ENCODE measurements at regions of chr18 and their contacts with region 1.

Region 1: GRCh38 chr18:76922107-76922506 is 99.8 kb downstream of the ZNF236 start:
- DNase-seq: peak; percentile 83
- H3K4me3 ChIP-seq: no peak overlapping the region
- H3K27ac ChIP-seq: no peak overlapping the region
- H3K4me1 ChIP-seq: no peaks in the 10 kb centered on the region
- H3K27me3 ChIP-seq: no peaks in the 10 kb centered on the region
- CTCF ChIP-seq: peak; percentile 41
- EP300 ChIP-seq: no peak
- RAD21 ChIP-seq: peak; percentile 92

Region 2: DNA sequence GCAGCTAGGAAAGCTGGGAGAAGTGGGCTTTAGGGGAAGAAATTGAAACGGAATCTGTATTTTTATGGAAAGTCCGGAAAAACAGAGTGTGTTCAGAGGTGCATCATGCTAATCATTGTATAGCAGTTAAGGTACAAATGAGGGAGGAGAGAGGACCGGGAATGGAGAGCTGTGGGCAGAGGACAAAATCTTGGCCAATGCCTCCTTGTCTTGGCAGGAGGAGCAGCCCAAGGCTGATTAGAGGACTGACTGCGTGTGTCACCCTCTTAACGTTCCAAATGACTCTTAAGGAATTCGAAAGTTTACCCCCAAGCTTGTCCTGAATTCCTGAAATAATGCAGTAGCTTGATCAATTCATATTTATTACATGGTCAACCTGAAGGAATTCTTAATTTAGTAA is 18.7 kb before region 1 on chr18:
- CTCF ChIA-PET with region 1: interaction called, 35 read pairs
- POLR2A ChIA-PET with region 1: no interaction called
- DNase-seq: no peak
- H3K4me3 ChIP-seq: no peak overlapping the region
- H3K27ac ChIP-seq: no peak overlapping the region
- H3K4me1 ChIP-seq: no peaks in the 10 kb centered on the region; a peak in 1 of 4 replicates
- H3K27me3 ChIP-seq: no peaks in the 10 kb centered on the region
- CTCF ChIP-seq: no peak
- EP300 ChIP-seq: no peak
- RAD21 ChIP-seq: no peak

Region 3: GRCh38 chr18:76943542-76944339 is 21.6 kb after region 1 on chr18:
- CTCF ChIA-PET with region 1: interaction called, 64 read pairs
- POLR2A ChIA-PET with region 1: no interaction called
- DNase-seq: no peak
- H3K4me3 ChIP-seq: no peak overlapping the region
- H3K27ac ChIP-seq: no peak overlapping the region
- H3K4me1 ChIP-seq: no peaks in the 10 kb centered on the region
- H3K27me3 ChIP-seq: no peaks in the 10 kb centered on the region
- CTCF ChIP-seq: no peak
- EP300 ChIP-seq: no peak
- RAD21 ChIP-seq: no peak

Region 4: DNA sequence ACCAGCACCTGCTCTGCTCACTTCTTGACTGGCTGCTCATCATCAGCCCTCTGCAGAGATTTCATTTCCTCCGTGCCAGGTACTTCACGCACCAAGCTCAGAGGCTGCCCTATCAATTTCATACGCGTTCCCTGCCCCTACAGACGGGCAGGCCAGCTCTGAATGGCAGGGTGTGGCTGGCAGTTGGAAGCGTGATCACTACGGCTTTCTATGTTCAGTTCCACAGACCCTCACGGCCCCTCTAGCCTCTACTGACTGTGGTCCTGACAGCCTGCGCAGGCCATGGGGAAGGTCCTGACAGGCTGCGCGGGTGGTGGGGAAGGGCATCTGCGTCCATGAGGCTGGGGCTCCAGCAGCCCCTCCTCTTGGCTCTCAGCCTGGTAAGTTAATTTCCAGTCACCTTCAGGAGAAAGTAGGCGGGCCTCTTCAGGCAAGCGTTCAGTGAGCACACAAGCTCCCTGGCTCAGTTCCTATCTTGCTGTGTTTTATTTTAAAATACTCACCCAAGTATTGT is 55.1 kb after region 1 on chr18:
- CTCF ChIA-PET with region 1: interaction called, 191 read pairs
- POLR2A ChIA-PET with region 1: no interaction called
- DNase-seq: no peak
- H3K4me3 ChIP-seq: no peak overlapping the region
- H3K27ac ChIP-seq: no peak overlapping the region
- H3K4me1 ChIP-seq: peaks cover 0 to 23% of the 10 kb centered on the region in 2 experiments; a peak in 1 of 4 replicates
- H3K27me3 ChIP-seq: no peaks in the 10 kb centered on the region
- CTCF ChIP-seq: no peak
- EP300 ChIP-seq: no peak
- RAD21 ChIP-seq: no peak

Region 5: GRCh38 chr18:76988031-76988826 is 66.1 kb after region 1 on chr18:
- CTCF ChIA-PET with region 1: interaction called, 191 read pairs
- POLR2A ChIA-PET with region 1: no interaction called
- DNase-seq: no peak
- H3K4me3 ChIP-seq: no peak overlapping the region
- H3K27ac ChIP-seq: no peak overlapping the region
- H3K4me1 ChIP-seq: peaks cover 0 to 10% of the 10 kb centered on the region in 2 experiments; a peak in 1 of 4 replicates
- H3K27me3 ChIP-seq: no peaks in the 10 kb centered on the region
- CTCF ChIP-seq: no peak
- EP300 ChIP-seq: no peak
- RAD21 ChIP-seq: no peak